ENCODE measurements at regions of chr9 and their contacts with region 1.

Region 1: GRCh38 chr9:93453047-93453914 is at the start of gene FAM120AOS:
- DNase-seq: peak; percentile 91
- ATAC-seq: peak; percentile 89
- H3K4me3 ChIP-seq: peak within 1 kb of the TSS; percentile 95 to 99 (median 95)
- H3K27ac ChIP-seq: peak within 1 kb of the TSS; percentile 88
- H3K4me1 ChIP-seq: peaks cover 57% of the 10 kb centered on the region
- H3K27me3 ChIP-seq: no peaks in the 10 kb centered on the region; a peak in 1 of 5 replicates
- CTCF ChIP-seq: no peak
- EP300 ChIP-seq: no peak
- POLR2A ChIP-seq: peak; percentile 5 to 57; a peak in 2 of 4 replicates
- RAD21 ChIP-seq: no peak
- total RNA-seq, gene FAM120AOS: 32.0 and 34.6 TPM in 2 replicates

Region 2: GRCh38 chr9:93309889-93310425 is 143.3 kb before region 1 on chr9:
- CTCF ChIA-PET with region 1: no interaction called
- POLR2A ChIA-PET with region 1: interaction called, 3 read pairs
- in situ Hi-C with region 1: no loop called
- intact Hi-C with region 1: loop called (anchors 5 kb)
- DNase-seq: no peak
- ATAC-seq: no peak
- H3K4me3 ChIP-seq: no peak overlapping the region
- H3K27ac ChIP-seq: no peak overlapping the region
- H3K4me1 ChIP-seq: peaks cover 40% of the 10 kb centered on the region
- H3K27me3 ChIP-seq: no peaks in the 10 kb centered on the region
- CTCF ChIP-seq: no peak
- EP300 ChIP-seq: no peak
- POLR2A ChIP-seq: no peak
- RAD21 ChIP-seq: no peak

Region 3: GRCh38 chr9:93464395-93464794 is 11.1 kb after region 1 on chr9:
- CTCF ChIA-PET with region 1: no interaction called
- POLR2A ChIA-PET with region 1: interaction called, 10 read pairs
- in situ Hi-C with region 1: no loop called
- intact Hi-C with region 1: no loop called
- DNase-seq: no peak
- ATAC-seq: no peak
- H3K4me3 ChIP-seq: no peak overlapping the region
- H3K27ac ChIP-seq: no peak overlapping the region
- H3K4me1 ChIP-seq: peaks cover 95% of the 10 kb centered on the region
- H3K27me3 ChIP-seq: no peaks in the 10 kb centered on the region
- CTCF ChIP-seq: no peak
- EP300 ChIP-seq: no peak
- POLR2A ChIP-seq: no peak
- RAD21 ChIP-seq: no peak

Region 4: GRCh38 chr9:93566408-93567270 is 113.4 kb after region 1 on chr9:
- CTCF ChIA-PET with region 1: no interaction called
- POLR2A ChIA-PET with region 1: interaction called, 7 read pairs
- in situ Hi-C with region 1: no loop called
- intact Hi-C with region 1: loop called (anchors 5 kb)
- DNase-seq: peak; percentile 87
- ATAC-seq: peak; percentile 96
- H3K4me3 ChIP-seq: peak overlapping the region; percentile 59 to 79 (median 73)
- H3K27ac ChIP-seq: peak overlapping the region; percentile 83
- H3K4me1 ChIP-seq: peaks cover 14% of the 10 kb centered on the region
- H3K27me3 ChIP-seq: no peaks in the 10 kb centered on the region; a peak in 1 of 5 replicates
- CTCF ChIP-seq: peak; percentile 94
- EP300 ChIP-seq: no peak
- POLR2A ChIP-seq: peak; percentile 61 to 86
- RAD21 ChIP-seq: peak; percentile 80

Region 5: GRCh38 chr9:94199776-94200175 is 746.5 kb after region 1 on chr9:
- CTCF ChIA-PET with region 1: no interaction called
- POLR2A ChIA-PET with region 1: no interaction called
- in situ Hi-C with region 1: no loop called
- intact Hi-C with region 1: no loop called
- DNase-seq: no peak
- ATAC-seq: no peak
- H3K4me3 ChIP-seq: no peak overlapping the region
- H3K27ac ChIP-seq: no peak overlapping the region
- H3K4me1 ChIP-seq: no peaks in the 10 kb centered on the region
- H3K27me3 ChIP-seq: peaks cover 0 to 2% of the 10 kb centered on the region in 2 experiments; a peak in 1 of 5 replicates
- CTCF ChIP-seq: no peak
- EP300 ChIP-seq: no peak
- POLR2A ChIP-seq: no peak
- RAD21 ChIP-seq: no peak